Mammary epithelial cell (primary cell): ENCODE measurements at regions of chr11 and their contacts with region 1.

Region 1: DNA sequence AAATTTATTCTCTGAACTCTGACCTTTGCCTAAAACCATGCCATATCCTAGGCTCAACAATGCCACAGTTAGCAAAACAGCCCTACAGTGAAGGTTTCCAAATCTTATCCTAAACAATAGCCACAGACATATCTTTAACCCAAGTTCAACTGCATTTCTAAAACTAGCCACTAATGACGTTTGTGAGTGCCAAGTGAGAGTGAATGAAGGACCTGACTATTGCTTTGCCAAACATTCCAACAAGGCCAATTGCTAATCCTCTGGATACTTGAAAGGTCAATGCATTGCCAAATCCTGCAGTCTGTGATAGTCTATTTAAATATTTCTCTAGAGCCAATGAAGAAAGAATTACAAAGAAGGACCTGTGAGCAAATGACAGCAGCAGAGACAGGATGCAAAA is 2.5 kb upstream of the OR4C45 start:
- DNase-seq: no peak
- H3K4me3 ChIP-seq: no peak overlapping the region
- H3K27ac ChIP-seq: no peak overlapping the region
- H3K4me1 ChIP-seq: no peaks in the 10 kb centered on the region
- H3K27me3 ChIP-seq: no peaks in the 10 kb centered on the region
- CTCF ChIP-seq: no peak

Region 2: DNA sequence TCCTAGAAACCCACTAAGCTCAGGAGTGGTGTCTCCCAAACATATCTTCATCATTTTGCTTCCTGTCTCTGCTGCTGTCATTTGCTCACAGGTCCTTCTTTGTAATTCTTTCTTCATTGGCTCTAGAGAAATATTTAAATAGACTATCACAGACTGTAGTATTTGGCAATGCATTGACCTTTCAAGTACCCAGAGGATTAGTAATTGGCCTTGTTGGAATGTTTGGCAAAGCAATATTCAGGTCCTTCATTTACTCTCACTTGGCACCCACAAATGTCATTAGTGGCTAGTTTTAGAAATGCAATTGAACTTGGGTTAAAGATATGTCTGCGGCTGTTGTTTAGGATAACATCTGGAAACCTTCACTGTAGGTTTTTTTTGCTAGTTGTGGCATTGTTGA is 1675.5 kb before region 1 on chr11:
- CTCF ChIA-PET with region 1: no interaction called
- dilution Hi-C with region 1: loop called (anchors 5 kb)
- in situ Hi-C with region 1: no loop called
- intact Hi-C with region 1: no loop called
- DNase-seq: no peak
- H3K4me3 ChIP-seq: no peak overlapping the region
- H3K27ac ChIP-seq: no peak overlapping the region
- H3K4me1 ChIP-seq: no peaks in the 10 kb centered on the region
- H3K27me3 ChIP-seq: no peaks in the 10 kb centered on the region
- CTCF ChIP-seq: no peak

Region 3: DNA sequence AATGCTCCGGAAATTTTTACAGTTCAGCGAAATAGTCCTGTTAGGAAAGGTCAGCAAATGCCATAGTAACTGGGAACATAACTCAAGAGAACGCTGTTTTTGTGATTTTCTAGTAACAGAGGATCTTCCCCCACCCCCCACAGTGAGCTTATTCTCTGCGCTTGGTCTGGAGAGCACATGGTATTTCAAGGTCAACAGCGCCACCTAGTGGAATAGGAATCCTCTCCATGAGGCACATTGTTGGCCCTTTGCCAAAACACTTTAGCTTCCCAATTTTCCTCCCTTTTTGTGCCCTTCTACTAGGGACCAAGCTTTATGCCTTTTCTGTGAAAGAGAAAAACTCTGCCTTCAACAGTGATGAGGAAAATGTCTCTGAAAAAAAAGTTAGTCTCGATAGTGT is 34.6 kb before region 1 on chr11:
- CTCF ChIA-PET with region 1: no interaction called
- dilution Hi-C with region 1: no loop called
- in situ Hi-C with region 1: no loop called
- intact Hi-C with region 1: no loop called
- DNase-seq: peak; percentile 29
- H3K4me3 ChIP-seq: no peak overlapping the region
- H3K27ac ChIP-seq: no peak overlapping the region
- H3K4me1 ChIP-seq: no peaks in the 10 kb centered on the region
- H3K27me3 ChIP-seq: no peaks in the 10 kb centered on the region
- CTCF ChIP-seq: peak; percentile 34 to 54

Region 4: GRCh38 chr11:50072226-50073112 is 42.3 kb after region 1 on chr11:
- CTCF ChIA-PET with region 1: no interaction called
- dilution Hi-C with region 1: no loop called
- in situ Hi-C with region 1: no loop called
- intact Hi-C with region 1: no loop called
- DNase-seq: no peak
- H3K4me3 ChIP-seq: no peak overlapping the region
- H3K27ac ChIP-seq: no peak overlapping the region
- H3K4me1 ChIP-seq: no peaks in the 10 kb centered on the region
- H3K27me3 ChIP-seq: no peaks in the 10 kb centered on the region
- CTCF ChIP-seq: no peak